ENCODE measurements at regions of chr19 and their contacts with region 1.

Region 1: GRCh38 chr19:53892981-53893325 is 11.0 kb downstream of the PRKCG start:
- DNase-seq: no peak
- H3K4me3 ChIP-seq: no peak overlapping the region
- H3K27ac ChIP-seq: no peak overlapping the region
- H3K4me1 ChIP-seq: peaks cover 23% of the 10 kb centered on the region
- H3K27me3 ChIP-seq: no peaks in the 10 kb centered on the region
- CTCF ChIP-seq: no peak

Region 2: GRCh38 chr19:53977429-53977990 is 84.6 kb after region 1 on chr19:
- CTCF ChIA-PET with region 1: no interaction called
- POLR2A ChIA-PET with region 1: interaction called, 3 read pairs
- intact Hi-C with region 1: loop called (anchors 5 kb)
- DNase-seq: peak; percentile 72 to 79
- H3K4me3 ChIP-seq: no peak overlapping the region
- H3K27ac ChIP-seq: no peak overlapping the region
- H3K4me1 ChIP-seq: peaks cover 6% of the 10 kb centered on the region; the same call in 1 of the 2 replicates
- H3K27me3 ChIP-seq: no peaks in the 10 kb centered on the region
- CTCF ChIP-seq: no peak

Region 3: GRCh38 chr19:54041969-54042606 is 149.1 kb after region 1 on chr19:
- CTCF ChIA-PET with region 1: no interaction called
- POLR2A ChIA-PET with region 1: no interaction called
- intact Hi-C with region 1: no loop called
- DNase-seq: peak; percentile 22 to 64
- H3K4me3 ChIP-seq: no peak overlapping the region
- H3K27ac ChIP-seq: no peak overlapping the region
- H3K4me1 ChIP-seq: peaks cover 4% of the 10 kb centered on the region; the same call in 1 of the 2 replicates
- H3K27me3 ChIP-seq: peaks cover 21% of the 10 kb centered on the region
- CTCF ChIP-seq: no peak

Region 4: GRCh38 chr19:54115109-54116063 is 222.4 kb after region 1 on chr19 and contains the starts of genes PRPF31 and TFPT:
- CTCF ChIA-PET with region 1: no interaction called
- POLR2A ChIA-PET with region 1: interaction called, 37 read pairs
- intact Hi-C with region 1: no loop called
- DNase-seq: peak; percentile 94 to 95
- H3K4me3 ChIP-seq: peak within 1 kb of the TSS; percentile 78
- H3K27ac ChIP-seq: peak within 1 kb of the TSS; percentile 63
- H3K4me1 ChIP-seq: peaks cover 14% of the 10 kb centered on the region
- H3K27me3 ChIP-seq: no peaks in the 10 kb centered on the region
- CTCF ChIP-seq: no peak
- total RNA-seq, gene PRPF31: 86.1 and 109 TPM in 2 replicates
- total RNA-seq, gene TFPT: 35.8 and 47.4 TPM in 2 replicates

Measured in PC-9 (cell line).